ENCODE measurements at regions of chr4 and their contacts with region 1.

Region 1: GRCh38 chr4:141599853-141600252 is 36.5 kb upstream of the IL15 start:
- DNase-seq: peak; percentile 4
- H3K4me3 ChIP-seq: no peak overlapping the region
- H3K27me3 ChIP-seq: no peaks in the 10 kb centered on the region
- CTCF ChIP-seq: no peak

Region 2: GRCh38 chr4:141346144-141346543 is 253.7 kb before region 1 on chr4:
- CTCF ChIA-PET with region 1: no interaction called
- POLR2A ChIA-PET with region 1: no interaction called
- DNase-seq: no peak
- H3K4me3 ChIP-seq: no peak overlapping the region
- H3K27me3 ChIP-seq: no peaks in the 10 kb centered on the region
- CTCF ChIP-seq: peak; percentile 55

Region 3: GRCh38 chr4:141501931-141502330 is 97.9 kb before region 1 on chr4:
- CTCF ChIA-PET with region 1: no interaction called
- POLR2A ChIA-PET with region 1: interaction called, 16 read pairs
- DNase-seq: no peak
- H3K4me3 ChIP-seq: no peak overlapping the region
- H3K27me3 ChIP-seq: no peaks in the 10 kb centered on the region
- CTCF ChIP-seq: no peak

Region 4: DNA sequence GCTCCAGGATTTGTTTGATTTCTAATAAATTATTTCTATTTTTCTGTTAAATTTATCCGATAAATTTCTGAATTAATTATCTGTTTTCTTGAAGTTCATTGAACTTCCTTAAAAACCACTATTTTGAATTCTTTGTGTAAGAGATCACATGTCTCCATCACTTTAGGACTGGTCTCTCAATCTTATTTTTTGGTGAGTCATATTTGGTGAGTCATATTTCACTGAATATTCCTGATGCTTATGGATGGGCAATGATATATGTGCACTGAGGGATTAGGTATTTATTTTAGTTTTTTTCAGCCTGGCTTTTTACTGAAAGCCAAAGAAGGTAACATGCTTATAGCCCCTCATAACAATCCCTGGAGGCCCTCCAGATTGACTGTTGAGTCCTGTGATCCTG is 12.0 kb before region 1 on chr4:
- CTCF ChIA-PET with region 1: no interaction called
- POLR2A ChIA-PET with region 1: no interaction called
- DNase-seq: no peak
- H3K4me3 ChIP-seq: no peak overlapping the region
- H3K27me3 ChIP-seq: no peaks in the 10 kb centered on the region
- CTCF ChIP-seq: no peak

Region 5: GRCh38 chr4:141614878-141615586 is 15.2 kb after region 1 on chr4:
- CTCF ChIA-PET with region 1: interaction called, 3 read pairs
- POLR2A ChIA-PET with region 1: interaction called, 13 read pairs
- DNase-seq: no peak
- H3K4me3 ChIP-seq: no peak overlapping the region
- H3K27me3 ChIP-seq: no peaks in the 10 kb centered on the region
- CTCF ChIP-seq: no peak

Measured in BJ (cell line).